ENCODE measurements at regions of chr3 and their contacts with region 1.

Region 1: GRCh38 chr3:184568924-184569829 is 7.6 kb downstream of the EPHB3 start:
- DNase-seq: peak; percentile 85 to 93 (median 92)
- ATAC-seq: peak; percentile 84 to 91
- H3K4me3 ChIP-seq: peak overlapping the region; percentile 49
- H3K27ac ChIP-seq: no peak overlapping the region
- H3K4me1 ChIP-seq: no peaks in the 10 kb centered on the region
- H3K27me3 ChIP-seq: no peaks in the 10 kb centered on the region

Region 2: DNA sequence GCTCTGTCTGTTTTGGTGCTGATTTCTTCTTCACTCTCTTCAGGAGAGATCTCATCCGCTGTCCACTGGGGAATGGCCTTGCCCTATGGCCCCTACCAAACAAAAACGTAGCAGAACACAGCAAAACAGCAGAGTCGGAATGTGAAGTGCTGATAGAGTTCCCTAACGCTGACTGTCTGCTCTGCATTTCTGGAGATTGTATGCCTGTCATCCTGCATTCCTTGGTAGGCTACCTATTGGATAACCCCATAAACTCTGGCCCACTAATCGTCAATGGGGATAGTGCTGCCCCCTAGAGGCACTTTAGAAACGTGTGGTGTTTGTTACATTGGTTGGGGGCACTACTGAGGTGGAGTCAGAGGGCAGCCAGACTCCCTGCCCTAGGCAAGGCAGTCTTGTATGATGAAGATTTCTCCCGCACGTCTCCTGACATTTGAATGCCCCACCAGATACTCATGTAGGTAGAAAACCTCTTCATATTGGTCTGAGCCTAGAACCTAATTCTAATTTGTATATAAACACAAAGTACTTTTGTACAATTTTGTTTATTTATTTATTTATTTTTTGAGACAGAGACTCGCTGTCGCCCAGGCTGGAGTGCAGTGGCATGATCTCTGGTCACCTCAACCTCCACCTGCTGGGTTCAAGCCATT is 158.3 kb after region 1 on chr3:
- intact Hi-C with region 1: loop called in 1 of 4 experiments (anchors 5 kb)
- DNase-seq: peak in 1 of 3 donors; percentile 68
- ATAC-seq: peak; percentile 88 to 94
- H3K4me3 ChIP-seq: no peak overlapping the region
- H3K27ac ChIP-seq: no peak overlapping the region
- H3K4me1 ChIP-seq: no peaks in the 10 kb centered on the region
- H3K27me3 ChIP-seq: no peaks in the 10 kb centered on the region

Region 3: GRCh38 chr3:184737641-184738535 is 168.7 kb after region 1 on chr3:
- intact Hi-C with region 1: no loop called
- DNase-seq: no peak
- ATAC-seq: peak in 1 of 2 donors; percentile 25
- H3K4me3 ChIP-seq: no peak overlapping the region
- H3K27ac ChIP-seq: no peak overlapping the region
- H3K4me1 ChIP-seq: no peaks in the 10 kb centered on the region
- H3K27me3 ChIP-seq: no peaks in the 10 kb centered on the region

Measured in right cardiac atrium (tissue), 5 donors.